ENCODE measurements at regions of chr11 and their contacts with region 1.

Region 1: GRCh38 chr11:64976651-64977050 is 4.7 kb upstream of the MAJIN start:
- DNase-seq: no peak
- H3K4me3 ChIP-seq: no peak overlapping the region
- H3K27ac ChIP-seq: no peak overlapping the region
- H3K4me1 ChIP-seq: peaks cover 0 to 3% of the 10 kb centered on the region in 2 donors
- H3K27me3 ChIP-seq: peaks cover 0 to 3% of the 10 kb centered on the region in 2 donors
- CTCF ChIP-seq: no peak
- POLR2A ChIP-seq: no peak

Region 2: DNA sequence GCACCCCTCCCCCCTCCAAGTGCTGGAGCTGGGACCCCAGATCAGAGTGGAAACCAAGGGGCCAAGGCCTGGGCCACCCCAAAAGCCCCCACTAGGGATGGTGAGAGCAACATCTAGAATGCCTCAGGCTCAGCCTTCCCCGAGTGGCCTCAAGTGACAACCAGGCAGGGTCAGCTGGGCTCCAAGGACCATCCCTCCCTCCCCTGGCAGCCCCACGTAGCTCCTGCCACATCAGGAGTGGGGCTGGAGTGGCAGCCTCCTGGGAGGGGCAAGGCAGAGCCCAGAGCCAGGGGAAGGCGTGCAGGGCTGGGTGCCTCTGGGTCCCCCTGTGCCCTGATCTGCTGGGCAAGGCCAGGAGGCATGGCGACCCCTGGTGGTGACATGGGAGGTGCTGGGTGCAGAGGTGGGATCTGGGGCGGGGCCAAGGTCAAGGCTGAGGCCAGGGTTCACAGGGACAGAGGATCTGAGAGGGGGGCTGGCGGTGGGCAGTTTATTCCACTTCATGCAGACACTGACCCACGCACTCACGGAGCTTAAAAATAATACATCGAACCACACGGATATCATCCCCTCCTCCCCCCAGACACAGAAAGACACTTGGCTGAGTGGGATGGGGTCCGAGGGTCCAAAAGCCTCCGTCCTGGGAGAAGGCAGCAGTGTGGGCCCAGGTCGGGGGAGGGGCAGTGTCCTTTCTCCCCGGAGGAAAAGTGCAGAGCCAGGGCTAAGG is 82.4 kb before region 1 on chr11:
- intact Hi-C with region 1: no loop called
- DNase-seq: peak; percentile 80 to 83
- H3K4me3 ChIP-seq: no peak overlapping the region
- H3K27ac ChIP-seq: peak overlapping the region in 1 of 2 donors; percentile 28
- H3K4me1 ChIP-seq: no peaks in the 10 kb centered on the region
- H3K27me3 ChIP-seq: no peaks in the 10 kb centered on the region
- CTCF ChIP-seq: peak; percentile 82 to 93 (median 90)
- POLR2A ChIP-seq: peak in 1 of 2 donors; percentile 14

Region 3: GRCh38 chr11:64916775-64917662 is 59.6 kb before region 1 on chr11 and contains the start of gene ATG2A:
- intact Hi-C with region 1: no loop called
- DNase-seq: peak; percentile 99
- H3K4me3 ChIP-seq: peak within 1 kb of the TSS; percentile 81 to 85
- H3K27ac ChIP-seq: peak within 1 kb of the TSS; percentile 87 to 95
- H3K4me1 ChIP-seq: no peaks in the 10 kb centered on the region
- H3K27me3 ChIP-seq: no peaks in the 10 kb centered on the region
- CTCF ChIP-seq: peak in 2 of 4 experiments; percentile 16 to 40
- POLR2A ChIP-seq: peak; percentile 79 to 88
- total RNA-seq, gene ATG2A: 6.8 to 39.6 (median 18.4) TPM

Region 4: DNA sequence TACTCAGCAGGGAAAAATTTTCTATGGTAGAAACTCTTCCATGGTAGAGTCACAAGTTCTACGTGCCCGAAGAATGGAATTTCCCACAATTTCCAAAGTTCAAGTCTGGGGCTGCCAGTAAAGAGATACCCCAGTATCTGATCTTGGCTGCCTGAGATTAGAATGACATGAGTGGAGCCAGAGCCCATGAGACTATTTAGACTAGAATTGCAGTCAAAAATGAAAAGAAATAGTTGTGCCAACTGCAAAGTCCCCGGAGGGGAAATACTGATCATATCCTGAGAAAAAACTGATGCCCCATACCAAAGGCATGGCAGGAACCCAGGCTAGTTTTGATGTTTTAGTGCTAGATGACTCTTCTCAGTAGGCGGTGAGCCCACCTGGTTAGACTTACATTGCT is 15.9 kb before region 1 on chr11:
- intact Hi-C with region 1: loop called (anchors 1 kb)
- DNase-seq: no peak
- H3K4me3 ChIP-seq: no peak overlapping the region
- H3K27ac ChIP-seq: no peak overlapping the region
- H3K4me1 ChIP-seq: no peaks in the 10 kb centered on the region
- H3K27me3 ChIP-seq: no peaks in the 10 kb centered on the region
- CTCF ChIP-seq: no peak
- POLR2A ChIP-seq: no peak